Breast epithelium (tissue), 4 donors: ENCODE measurements at regions of chr22 and their contacts with region 1.

Region 1: DNA sequence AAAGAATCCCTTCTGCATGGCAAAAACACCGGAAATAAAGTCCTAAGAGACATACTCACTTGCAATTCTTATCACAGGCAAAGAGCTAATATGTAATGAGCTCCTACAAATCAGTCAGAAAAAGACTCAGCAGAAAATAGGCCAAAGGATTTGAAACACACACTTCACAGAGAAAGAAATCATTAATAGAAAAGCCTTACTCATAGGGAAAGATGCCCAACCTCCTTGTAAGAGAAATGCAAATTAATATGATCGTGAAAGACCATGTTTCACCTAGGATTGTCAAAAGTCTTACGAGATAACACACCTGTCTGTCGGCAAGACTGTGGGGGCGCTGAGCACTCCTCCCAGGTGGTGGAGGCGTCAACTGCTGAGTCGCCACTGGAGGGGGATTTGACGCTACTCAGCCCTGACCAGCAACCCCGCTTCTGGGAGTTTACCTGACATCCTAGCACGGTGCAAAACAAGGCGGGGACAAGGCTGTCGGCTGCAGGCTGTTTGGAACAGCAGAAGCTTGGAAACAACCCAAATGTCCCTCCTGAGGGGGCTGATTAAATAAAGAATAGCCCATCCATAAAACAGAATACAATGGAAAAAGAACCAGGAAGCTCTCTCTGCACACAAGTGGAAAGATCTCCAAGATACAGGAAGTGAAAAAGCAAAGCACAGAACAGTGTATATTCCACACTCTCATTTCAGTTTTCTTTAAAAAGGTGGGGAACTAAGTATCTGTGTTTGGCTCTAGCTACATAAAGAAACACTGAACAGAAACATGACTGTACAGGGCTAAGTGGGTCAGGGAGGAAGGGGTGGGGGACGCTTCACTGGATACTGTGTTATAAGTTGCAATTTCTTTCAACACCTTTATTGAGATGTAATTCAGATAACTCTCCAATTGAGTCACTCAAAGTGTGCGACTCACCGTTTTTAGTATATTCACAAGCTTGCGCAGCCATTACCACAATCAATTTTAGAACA is 11.5 kb downstream of the CSNK1E start:
- DNase-seq: no peak
- H3K4me3 ChIP-seq: peak overlapping the region in 1 of 3 donors; percentile 20
- H3K27ac ChIP-seq: peak overlapping the region; percentile 80 to 98
- H3K4me1 ChIP-seq: peaks cover 17 to 38% of the 10 kb centered on the region in 2 donors
- H3K27me3 ChIP-seq: no peaks in the 10 kb centered on the region
- CTCF ChIP-seq: no peak
- POLR2A ChIP-seq: no peak

Region 2: GRCh38 chr22:38276166-38276565 is 29.6 kb before region 1 on chr22:
- intact Hi-C with region 1: loop called (anchors 1 kb)
- DNase-seq: no peak
- H3K4me3 ChIP-seq: no peak overlapping the region
- H3K27ac ChIP-seq: no peak overlapping the region
- H3K4me1 ChIP-seq: peaks cover 4 to 8% of the 10 kb centered on the region in 2 donors
- H3K27me3 ChIP-seq: no peaks in the 10 kb centered on the region
- CTCF ChIP-seq: no peak
- POLR2A ChIP-seq: no peak

Region 3: DNA sequence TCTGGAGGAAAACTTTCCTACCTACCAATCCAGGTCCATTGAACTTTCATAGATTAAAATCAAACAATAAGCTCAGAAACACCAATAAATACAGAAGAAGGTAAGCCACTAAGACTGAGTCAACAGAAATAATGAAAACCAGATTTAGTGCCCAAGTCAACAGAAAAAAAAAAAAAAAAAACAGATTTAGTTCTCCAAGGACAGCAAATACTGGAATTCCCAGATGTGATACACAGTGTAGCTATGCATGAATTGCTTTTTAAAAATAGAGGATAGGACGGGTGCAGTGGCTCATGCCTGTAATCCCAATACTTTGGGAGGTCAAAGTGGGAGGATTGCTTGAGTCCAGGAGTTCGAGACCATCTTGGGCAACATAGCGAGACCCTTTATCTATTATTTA is 248.5 kb after region 1 on chr22:
- intact Hi-C with region 1: no loop called
- DNase-seq: no peak
- H3K4me3 ChIP-seq: no peak overlapping the region
- H3K27ac ChIP-seq: no peak overlapping the region
- H3K4me1 ChIP-seq: no peaks in the 10 kb centered on the region
- H3K27me3 ChIP-seq: no peaks in the 10 kb centered on the region
- CTCF ChIP-seq: no peak
- POLR2A ChIP-seq: no peak